Common myeloid progenitor, CD34-positive (primary cell): ENCODE measurements at regions of chr21 and their contacts with region 1.

Region 1: GRCh38 chr21:33924079-33924765 is 8.6 kb upstream of the ATP5PO start:
- DNase-seq: peak; percentile 78 to 85 (median 80)
- H3K4me3 ChIP-seq: no peak overlapping the region
- H3K27ac ChIP-seq: no peak overlapping the region
- H3K4me1 ChIP-seq: peaks cover 0 to 8% (median 0%) of the 10 kb centered on the region in 4 experiments
- H3K27me3 ChIP-seq: no peaks in the 10 kb centered on the region

Region 2: GRCh38 chr21:33943293-33943692 is 19.1 kb after region 1 on chr21:
- CTCF ChIA-PET with region 1: interaction called, 15 read pairs
- POLR2A ChIA-PET with region 1: no interaction called
- DNase-seq: peak in 1 of 3 donors; percentile 30
- H3K4me3 ChIP-seq: no peak overlapping the region
- H3K27ac ChIP-seq: no peak overlapping the region
- H3K4me1 ChIP-seq: peaks cover 8 to 29% (median 21%) of the 10 kb centered on the region in 4 experiments
- H3K27me3 ChIP-seq: no peaks in the 10 kb centered on the region

Region 3: DNA sequence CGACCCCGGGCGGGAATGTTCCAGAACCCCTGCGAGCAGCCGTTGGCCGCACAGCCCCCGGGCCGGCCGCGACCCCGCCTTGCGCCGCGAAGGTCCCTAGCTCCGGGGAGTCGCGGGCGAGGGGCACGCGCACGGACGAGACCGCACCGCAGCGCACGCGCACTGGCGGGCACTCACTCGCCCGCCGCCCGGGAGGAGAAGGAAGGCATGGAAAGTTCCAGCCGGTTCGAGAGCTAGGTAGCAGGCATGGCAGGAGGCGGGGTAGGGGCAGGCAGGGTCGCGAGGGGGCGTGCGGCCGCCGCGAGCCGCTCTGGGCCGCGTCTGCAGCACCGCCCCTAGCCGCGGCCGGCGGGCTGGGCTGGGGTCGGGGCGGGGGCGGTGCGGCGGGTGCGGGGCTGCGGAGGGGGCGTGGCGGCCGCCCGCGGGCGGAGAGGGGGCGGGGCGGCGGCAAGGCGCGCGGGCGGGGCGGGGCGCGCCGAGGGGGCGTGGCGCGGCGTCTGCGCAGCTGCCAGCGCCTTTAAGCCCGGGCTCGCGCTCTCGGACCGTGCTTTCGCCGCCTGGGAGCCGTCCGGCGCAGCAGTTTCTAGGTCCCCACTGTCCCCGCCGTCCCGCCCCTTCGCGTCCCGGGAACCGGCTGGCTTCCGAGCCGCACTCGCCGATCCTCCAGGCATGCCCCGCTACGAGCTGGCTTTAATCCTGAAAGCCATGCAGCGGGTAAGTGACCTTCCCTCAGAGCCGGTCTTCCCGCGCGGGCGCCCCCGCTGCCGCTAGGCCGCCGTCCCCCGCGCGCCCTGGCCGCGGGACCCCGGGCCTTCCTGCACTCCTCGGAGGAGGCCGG is 149.0 kb after region 1 on chr21 and contains the starts of genes MRPS6 and SLC5A3:
- CTCF ChIA-PET with region 1: interaction called, 10 read pairs
- POLR2A ChIA-PET with region 1: no interaction called
- DNase-seq: peak; percentile 75 to 85 (median 84)
- H3K4me3 ChIP-seq: peak within 1 kb of the TSS; percentile 58 to 92 (median 80)
- H3K27ac ChIP-seq: peak within 1 kb of the TSS in 1 of 2 experiments; percentile 68
- H3K4me1 ChIP-seq: peaks cover 0 to 43% (median 18%) of the 10 kb centered on the region in 4 experiments
- H3K27me3 ChIP-seq: no peaks in the 10 kb centered on the region

Region 4: GRCh38 chr21:34235514-34235913 is 311.3 kb after region 1 on chr21:
- CTCF ChIA-PET with region 1: interaction called, 13 read pairs
- POLR2A ChIA-PET with region 1: no interaction called
- DNase-seq: no peak
- H3K4me3 ChIP-seq: no peak overlapping the region
- H3K27ac ChIP-seq: no peak overlapping the region
- H3K4me1 ChIP-seq: no peaks in the 10 kb centered on the region
- H3K27me3 ChIP-seq: peaks cover 0 to 1% (median 0%) of the 10 kb centered on the region in 5 experiments

Region 5: DNA sequence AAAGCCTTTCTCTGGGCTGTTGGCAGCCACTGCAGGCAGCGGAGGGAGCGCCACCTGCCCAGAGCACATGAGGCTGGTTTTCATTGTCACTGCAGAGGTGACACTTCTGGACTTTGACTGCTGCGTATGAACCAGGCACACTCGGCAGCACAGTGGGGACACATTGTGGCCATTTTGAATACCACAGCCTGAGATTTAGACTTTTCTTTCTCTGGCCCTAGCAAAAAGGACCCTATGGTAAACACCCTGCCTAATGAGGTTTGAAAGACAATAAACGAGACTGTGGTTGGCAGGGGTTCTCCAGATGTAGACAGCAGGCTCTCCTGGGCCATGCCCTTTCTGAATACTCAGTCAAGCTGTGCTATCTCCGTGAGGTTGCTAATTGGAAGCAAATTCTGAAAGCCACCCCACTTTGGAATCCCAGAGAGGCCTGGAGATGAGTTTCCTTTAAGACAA is 427.6 kb after region 1 on chr21:
- CTCF ChIA-PET with region 1: interaction called, 112 read pairs
- POLR2A ChIA-PET with region 1: no interaction called
- DNase-seq: peak; percentile 56 to 77 (median 71)
- H3K4me3 ChIP-seq: no peak overlapping the region
- H3K27ac ChIP-seq: no peak overlapping the region
- H3K4me1 ChIP-seq: no peaks in the 10 kb centered on the region
- H3K27me3 ChIP-seq: no peaks in the 10 kb centered on the region